Transverse colon (tissue), 4 donors: ENCODE measurements at regions of chr7 and their contacts with region 1.

Region 1: GRCh38 chr7:140003913-140004382 is 58.8 kb downstream of the PARP12 start:
- DNase-seq: peak; percentile 19
- H3K4me3 ChIP-seq: no peak overlapping the region
- H3K27ac ChIP-seq: no peak overlapping the region
- H3K4me1 ChIP-seq: no peaks in the 10 kb centered on the region
- H3K27me3 ChIP-seq: no peaks in the 10 kb centered on the region
- CTCF ChIP-seq: peak; percentile 38 to 63 (median 51)
- EP300 ChIP-seq: no peak
- POLR2A ChIP-seq: no peak

Region 2: GRCh38 chr7:139494835-139495579 is 508.9 kb before region 1 on chr7:
- in situ Hi-C with region 1: loop called in 2 of 4 experiments (anchors 10 kb)
- intact Hi-C with region 1: loop called (anchors 10 kb)
- DNase-seq: no peak
- H3K4me3 ChIP-seq: no peak overlapping the region
- H3K27ac ChIP-seq: no peak overlapping the region
- H3K4me1 ChIP-seq: peaks cover 0 to 3% (median 1%) of the 10 kb centered on the region in 4 donors
- H3K27me3 ChIP-seq: peaks cover 7% of the 10 kb centered on the region
- CTCF ChIP-seq: no peak
- EP300 ChIP-seq: no peak
- POLR2A ChIP-seq: no peak

Region 3: DNA sequence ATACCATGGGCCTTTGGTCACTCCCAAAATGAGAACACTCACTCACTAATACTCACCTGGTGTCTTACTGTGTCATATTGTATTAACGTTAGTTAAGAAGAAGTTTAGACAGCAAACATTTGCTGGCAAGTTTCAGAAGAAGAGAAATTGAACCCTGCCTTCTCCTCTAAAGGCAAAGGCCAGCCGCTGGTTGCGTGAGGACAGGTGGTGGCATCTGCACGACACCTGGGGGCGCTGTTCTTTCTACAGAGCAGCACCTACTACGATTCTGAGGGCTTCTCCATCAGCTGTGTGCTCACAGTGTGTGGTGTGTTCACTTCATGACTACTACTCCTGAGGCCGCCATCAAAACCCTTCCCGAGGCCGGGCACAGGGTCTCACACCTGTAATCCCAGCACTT is 498.4 kb before region 1 on chr7:
- in situ Hi-C with region 1: loop called in 1 of 4 experiments (anchors 10 kb)
- intact Hi-C with region 1: loop called (anchors 10 kb)
- DNase-seq: no peak
- H3K4me3 ChIP-seq: no peak overlapping the region
- H3K27ac ChIP-seq: no peak overlapping the region
- H3K4me1 ChIP-seq: peaks cover 0 to under 1% (median 0%) of the 10 kb centered on the region in 4 donors
- H3K27me3 ChIP-seq: no peaks in the 10 kb centered on the region
- CTCF ChIP-seq: peak in 1 of 5 experiments; percentile 8
- EP300 ChIP-seq: no peak
- POLR2A ChIP-seq: no peak

Region 4: DNA sequence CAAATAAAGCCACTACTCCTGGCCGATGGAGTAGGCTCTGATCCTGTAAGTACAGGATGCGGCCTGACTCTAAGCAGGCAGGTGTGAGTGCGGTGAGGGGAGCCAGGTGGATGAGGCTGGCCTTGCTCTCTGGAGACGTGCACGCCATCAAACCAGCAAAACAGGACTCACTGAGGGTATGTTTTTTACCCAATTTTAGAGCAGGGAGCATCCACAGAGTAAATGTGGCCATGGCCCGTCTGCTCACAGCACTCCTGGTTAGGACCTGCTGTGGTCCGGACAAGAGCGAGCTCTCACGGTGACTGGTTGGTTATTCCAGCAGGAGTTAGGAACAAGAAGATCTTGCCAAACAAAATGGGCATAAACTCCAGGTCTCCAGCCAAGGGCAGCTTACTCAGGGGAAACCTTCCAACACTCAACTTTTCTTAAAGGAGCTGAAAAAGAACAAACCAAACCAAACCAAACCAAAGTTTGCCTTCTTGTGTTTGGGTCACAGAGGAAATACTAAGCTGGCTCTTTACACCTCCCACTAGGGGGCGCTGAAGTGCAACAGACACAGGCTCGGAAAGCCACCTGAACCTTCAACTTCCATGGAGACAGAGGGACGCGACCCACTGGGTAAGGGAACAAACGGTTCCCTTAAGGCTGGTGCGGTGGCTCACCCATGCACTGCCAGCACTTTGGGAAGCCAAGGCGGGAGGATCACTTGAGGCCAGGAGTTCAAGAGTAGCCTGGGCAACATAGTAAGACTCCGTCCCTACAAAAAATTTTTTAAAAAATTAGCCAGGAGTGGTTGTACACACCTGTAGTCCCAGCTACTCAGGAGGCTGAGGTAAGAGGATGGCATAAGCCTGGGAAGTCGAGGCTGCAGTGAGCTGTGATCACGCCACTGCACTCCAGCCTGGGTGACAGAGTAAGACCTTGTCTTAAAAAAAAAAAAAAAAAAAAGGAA is 358.1 kb before region 1 on chr7:
- in situ Hi-C with region 1: loop called (anchors 5 to 10 kb)
- intact Hi-C with region 1: loop called (anchors 2 kb)
- DNase-seq: peak; percentile 88
- H3K4me3 ChIP-seq: no peak overlapping the region
- H3K27ac ChIP-seq: no peak overlapping the region
- H3K4me1 ChIP-seq: peaks cover 0 to 27% (median 1%) of the 10 kb centered on the region in 4 donors
- H3K27me3 ChIP-seq: no peaks in the 10 kb centered on the region
- CTCF ChIP-seq: peak; percentile 87 to 94 (median 91)
- EP300 ChIP-seq: no peak
- POLR2A ChIP-seq: no peak